ENCODE measurements at regions of chr7 and their contacts with region 1.

Region 1: GRCh38 chr7:100563809-100564400 is 9.8 kb downstream of the SAP25 start:
- DNase-seq: peak; percentile 71
- H3K27ac ChIP-seq: peak overlapping the region; percentile 40
- CTCF ChIP-seq: peak; percentile 97

Region 2: GRCh38 chr7:100469227-100470044 is 94.5 kb before region 1 on chr7:
- CTCF ChIA-PET with region 1: interaction called, 32 read pairs
- POLR2A ChIA-PET with region 1: interaction called, 6 read pairs
- DNase-seq: peak; percentile 85
- H3K27ac ChIP-seq: peak overlapping the region; percentile 89
- CTCF ChIP-seq: peak; percentile 96

Region 3: DNA sequence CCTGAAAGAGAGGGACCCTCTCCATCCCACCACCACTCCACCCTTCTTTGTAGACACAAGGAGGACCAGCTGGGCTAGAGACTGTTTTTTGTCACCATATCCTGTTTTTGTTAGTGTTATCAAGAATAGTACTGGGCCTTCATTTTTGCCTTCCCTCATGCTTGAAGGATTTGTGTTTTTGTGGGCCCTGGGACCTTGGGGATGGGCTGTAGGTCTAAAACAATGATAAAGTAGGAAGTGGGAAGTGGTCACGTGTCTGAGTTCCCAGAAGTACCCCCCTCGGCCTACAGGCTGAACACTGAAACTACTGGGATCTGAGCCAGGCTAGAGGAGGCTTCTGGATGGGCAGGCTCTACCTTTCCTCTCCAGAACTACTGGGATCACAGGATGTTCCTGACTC is 16.0 kb before region 1 on chr7:
- CTCF ChIA-PET with region 1: interaction called, 11 read pairs
- POLR2A ChIA-PET with region 1: no interaction called
- DNase-seq: no peak
- H3K27ac ChIP-seq: peak overlapping the region; percentile 43
- CTCF ChIP-seq: no peak

Region 4: GRCh38 chr7:100789055-100789454 is 225.2 kb after region 1 on chr7:
- CTCF ChIA-PET with region 1: no interaction called
- POLR2A ChIA-PET with region 1: no interaction called
- DNase-seq: no peak
- H3K27ac ChIP-seq: no peak overlapping the region
- CTCF ChIP-seq: no peak

Measured in RWPE1 (cell line).